Posterior vena cava (tissue), 2 donors: ENCODE measurements at regions of chr17 and their contacts with region 1.

Region 1: GRCh38 chr17:71655542-71655941 is 465.3 kb upstream of the SOX9 start:
- DNase-seq: no peak

Region 2: GRCh38 chr17:71593078-71593477 is 62.5 kb before region 1 on chr17:
- intact Hi-C with region 1: loop called in 1 of 2 experiments (anchors 2 kb)
- DNase-seq: no peak